ENCODE measurements at regions of chr17 and their contacts with region 1.

Region 1: DNA sequence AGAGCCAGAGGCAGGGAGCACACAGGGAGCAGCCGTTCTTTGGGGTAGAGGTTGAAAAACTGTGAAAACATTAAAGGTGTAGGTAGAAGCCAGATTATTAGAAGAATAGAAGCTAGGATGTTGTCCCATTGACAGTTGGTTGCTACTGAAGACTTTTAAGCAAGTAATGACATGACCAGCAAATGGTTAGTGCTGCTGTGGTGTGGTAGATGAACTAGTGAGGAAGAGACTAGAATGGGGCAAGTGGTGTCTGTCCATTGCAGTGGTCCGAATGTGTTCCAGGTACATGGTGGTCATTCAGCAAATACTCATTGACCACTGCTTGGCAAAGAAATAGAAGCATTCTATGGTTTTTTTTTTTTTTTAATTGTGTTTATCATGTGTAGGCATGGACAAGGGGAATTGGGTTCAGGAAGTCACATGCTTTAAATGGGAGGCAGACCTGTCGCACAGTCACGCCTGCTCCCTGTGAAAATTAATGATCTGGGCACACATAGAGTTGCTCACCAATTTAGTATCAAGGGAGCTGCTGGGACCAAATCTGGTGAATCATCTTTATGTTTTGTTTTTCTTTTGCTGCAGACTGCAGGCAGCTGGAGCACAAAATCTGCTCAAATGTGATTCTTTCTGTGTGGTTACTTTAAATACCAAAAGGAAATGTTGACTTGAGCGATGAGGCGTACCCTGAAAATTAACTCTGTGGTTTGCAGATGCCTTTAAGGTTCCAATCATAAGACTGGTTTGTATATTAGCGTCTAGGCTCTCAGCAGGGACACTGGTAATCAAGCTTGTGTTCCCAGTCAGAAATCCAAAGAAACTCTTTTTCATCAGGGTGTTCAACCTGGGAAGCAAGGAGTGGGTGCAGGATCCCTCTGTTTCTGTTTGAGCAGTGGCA is 30.7 kb downstream of the YPEL2 start:
- DNase-seq: peak in 8 of 9 experiments; percentile 15 to 74 (median 50)
- ATAC-seq: peak; percentile 64
- H3K4me3 ChIP-seq: peak overlapping the region; percentile 16 to 44
- H3K4me3 Mint-ChIP-seq: peak overlapping the region; percentile 80
- H3K27ac ChIP-seq: peak overlapping the region; percentile 47 to 51
- H3K27ac Mint-ChIP-seq: peak overlapping the region; percentile 99
- H3K4me1 ChIP-seq: peaks cover 86% of the 10 kb centered on the region
- H3K4me1 Mint-ChIP-seq: peaks cover 88% of the 10 kb centered on the region
- H3K27me3 ChIP-seq: no peaks in the 10 kb centered on the region
- H3K27me3 Mint-ChIP-seq: no peaks in the 10 kb centered on the region
- CTCF ChIP-seq: no peak

Region 2: DNA sequence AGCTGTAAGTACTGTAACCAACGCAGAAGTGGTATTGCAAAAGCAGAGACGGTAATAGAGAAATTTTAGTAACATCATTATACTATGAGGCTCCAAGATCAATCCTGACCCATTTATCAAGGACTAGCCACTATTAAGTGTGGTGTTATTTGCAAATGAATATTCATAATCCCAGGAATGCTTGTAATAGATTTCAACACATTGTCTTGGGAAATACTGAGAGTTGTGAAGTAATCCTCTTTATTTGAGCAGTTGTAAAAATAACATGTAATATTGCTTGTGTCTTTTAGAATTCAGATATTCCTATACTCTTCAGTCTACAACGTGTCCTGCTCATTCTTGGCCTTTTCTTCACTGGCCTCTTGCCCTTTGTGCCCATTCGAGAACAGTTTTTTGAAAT is 95.4 kb before region 1 on chr17:
- CTCF ChIA-PET with region 1: no interaction called
- POLR2A ChIA-PET with region 1: no interaction called
- intact Hi-C with region 1: no loop called
- DNase-seq: no peak
- ATAC-seq: no peak
- H3K4me3 ChIP-seq: no peak overlapping the region
- H3K4me3 Mint-ChIP-seq: no peak overlapping the region
- H3K27ac ChIP-seq: no peak overlapping the region
- H3K27ac Mint-ChIP-seq: no peak overlapping the region
- H3K4me1 ChIP-seq: no peaks in the 10 kb centered on the region
- H3K4me1 Mint-ChIP-seq: no peaks in the 10 kb centered on the region
- H3K27me3 ChIP-seq: no peaks in the 10 kb centered on the region
- H3K27me3 Mint-ChIP-seq: no peaks in the 10 kb centered on the region
- CTCF ChIP-seq: no peak

Region 3: DNA sequence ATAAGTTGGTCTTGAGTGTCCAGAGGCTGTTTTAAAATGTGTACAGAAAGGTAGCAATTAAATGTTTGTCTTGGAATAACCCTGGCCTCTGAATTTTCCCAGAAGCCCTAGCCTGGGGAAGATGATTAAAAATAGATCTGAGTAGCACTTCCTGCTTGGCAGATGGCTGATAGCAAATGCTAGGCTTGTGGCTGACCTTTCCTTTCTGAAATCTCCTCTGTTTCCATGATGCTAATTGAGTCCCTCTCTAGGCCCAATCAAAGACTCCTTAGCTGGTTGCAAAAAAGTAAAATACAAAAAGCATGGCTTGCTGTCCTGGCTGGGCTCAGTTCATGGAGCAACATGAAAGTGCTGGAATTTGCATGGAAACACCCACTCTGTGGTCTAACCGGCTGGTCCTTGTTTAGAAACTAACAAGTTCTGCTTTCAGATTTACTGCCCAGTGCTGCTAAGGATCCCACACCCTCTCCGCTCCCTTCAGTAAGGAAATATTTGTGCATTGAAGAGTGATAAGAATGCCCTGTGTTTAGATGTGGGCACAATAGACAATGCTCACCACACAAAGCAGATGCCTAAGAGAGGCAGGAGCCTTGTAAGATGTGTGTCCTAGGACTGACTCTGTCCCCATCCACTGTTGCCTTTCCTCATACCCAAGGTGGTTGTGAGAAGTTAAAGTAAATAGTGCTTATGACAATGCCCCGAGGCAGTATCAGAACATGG is 10.1 kb after region 1 on chr17:
- CTCF ChIA-PET with region 1: interaction called, 3 read pairs
- POLR2A ChIA-PET with region 1: interaction called, 12 read pairs
- intact Hi-C with region 1: loop called in 1 of 2 experiments (anchors 2 kb)
- DNase-seq: no peak
- ATAC-seq: no peak
- H3K4me3 ChIP-seq: no peak overlapping the region
- H3K4me3 Mint-ChIP-seq: peak overlapping the region; percentile 4
- H3K27ac ChIP-seq: no peak overlapping the region
- H3K27ac Mint-ChIP-seq: peak overlapping the region; percentile 95
- H3K4me1 ChIP-seq: peaks cover 79% of the 10 kb centered on the region
- H3K4me1 Mint-ChIP-seq: peaks cover 85% of the 10 kb centered on the region
- H3K27me3 ChIP-seq: no peaks in the 10 kb centered on the region
- H3K27me3 Mint-ChIP-seq: no peaks in the 10 kb centered on the region
- CTCF ChIP-seq: no peak

Region 4: DNA sequence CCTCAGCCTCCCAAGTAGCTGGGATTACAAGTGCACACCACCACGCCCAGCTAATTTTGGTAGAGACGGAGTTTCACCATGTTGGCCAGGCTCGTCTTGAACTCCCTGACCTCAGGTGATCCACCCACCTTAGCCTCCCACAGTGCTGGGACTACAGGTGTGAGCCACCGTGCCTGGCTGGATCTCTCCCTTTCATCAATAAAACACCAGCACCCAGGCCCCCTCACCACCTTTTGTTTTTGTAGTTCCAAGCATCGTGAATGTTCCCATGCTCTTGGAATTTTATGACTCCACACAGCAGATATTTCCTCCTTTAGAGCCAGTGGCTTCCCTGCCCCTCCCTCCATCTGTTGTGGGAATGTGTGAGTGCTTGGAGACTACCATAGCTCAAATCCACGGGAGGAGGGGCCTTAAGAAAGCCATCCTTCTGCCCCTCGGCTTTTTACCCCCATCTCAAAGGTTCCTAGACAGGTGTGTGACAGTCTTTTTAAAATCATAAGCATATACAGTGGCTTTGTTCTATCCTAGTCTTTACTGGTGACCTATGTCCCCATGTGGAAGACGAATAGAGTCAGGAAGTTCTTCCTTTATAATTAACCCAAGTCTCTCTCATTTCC is 16.4 kb after region 1 on chr17:
- CTCF ChIA-PET with region 1: interaction called, 3 read pairs
- POLR2A ChIA-PET with region 1: interaction called, 12 read pairs
- intact Hi-C with region 1: loop called in 1 of 2 experiments (anchors 2 kb)
- DNase-seq: no peak
- ATAC-seq: no peak
- H3K4me3 ChIP-seq: no peak overlapping the region
- H3K4me3 Mint-ChIP-seq: no peak overlapping the region
- H3K27ac ChIP-seq: no peak overlapping the region
- H3K27ac Mint-ChIP-seq: no peak overlapping the region
- H3K4me1 ChIP-seq: peaks cover 46% of the 10 kb centered on the region
- H3K4me1 Mint-ChIP-seq: peaks cover 61% of the 10 kb centered on the region
- H3K27me3 ChIP-seq: no peaks in the 10 kb centered on the region
- H3K27me3 Mint-ChIP-seq: no peaks in the 10 kb centered on the region
- CTCF ChIP-seq: no peak

Region 5: GRCh38 chr17:59451706-59452105 is 89.5 kb after region 1 on chr17:
- CTCF ChIA-PET with region 1: no interaction called
- POLR2A ChIA-PET with region 1: no interaction called
- intact Hi-C with region 1: no loop called
- DNase-seq: no peak
- ATAC-seq: no peak
- H3K4me3 ChIP-seq: no peak overlapping the region
- H3K4me3 Mint-ChIP-seq: no peak overlapping the region
- H3K27ac ChIP-seq: no peak overlapping the region
- H3K27ac Mint-ChIP-seq: no peak overlapping the region
- H3K4me1 ChIP-seq: no peaks in the 10 kb centered on the region
- H3K4me1 Mint-ChIP-seq: no peaks in the 10 kb centered on the region
- H3K27me3 ChIP-seq: peaks cover 0 to 2% of the 10 kb centered on the region in 2 experiments
- H3K27me3 Mint-ChIP-seq: no peaks in the 10 kb centered on the region
- CTCF ChIP-seq: no peak

Measured in CD8-positive, alpha-beta T cell (primary cell).